Activated naive CD8-positive, alpha-beta T cell treated with anti-CD3 and anti-CD28 coated beads, Interleukin-2, amount 10 ng/mL, durations not matched to agents 7 days and 5 days (primary cell): ENCODE measurements at regions of chr11 and their contacts with region 1.

Region 1: GRCh38 chr11:9613118-9613829 is 39.8 kb downstream of the WEE1 start:
- DNase-seq: peak; percentile 89
- ATAC-seq: peak; percentile 65
- H3K4me3 Mint-ChIP-seq: peak overlapping the region; percentile 90
- H3K27ac Mint-ChIP-seq: peak overlapping the region; percentile 95
- H3K4me1 Mint-ChIP-seq: peaks cover 21% of the 10 kb centered on the region
- H3K27me3 Mint-ChIP-seq: no peaks in the 10 kb centered on the region

Region 2: DNA sequence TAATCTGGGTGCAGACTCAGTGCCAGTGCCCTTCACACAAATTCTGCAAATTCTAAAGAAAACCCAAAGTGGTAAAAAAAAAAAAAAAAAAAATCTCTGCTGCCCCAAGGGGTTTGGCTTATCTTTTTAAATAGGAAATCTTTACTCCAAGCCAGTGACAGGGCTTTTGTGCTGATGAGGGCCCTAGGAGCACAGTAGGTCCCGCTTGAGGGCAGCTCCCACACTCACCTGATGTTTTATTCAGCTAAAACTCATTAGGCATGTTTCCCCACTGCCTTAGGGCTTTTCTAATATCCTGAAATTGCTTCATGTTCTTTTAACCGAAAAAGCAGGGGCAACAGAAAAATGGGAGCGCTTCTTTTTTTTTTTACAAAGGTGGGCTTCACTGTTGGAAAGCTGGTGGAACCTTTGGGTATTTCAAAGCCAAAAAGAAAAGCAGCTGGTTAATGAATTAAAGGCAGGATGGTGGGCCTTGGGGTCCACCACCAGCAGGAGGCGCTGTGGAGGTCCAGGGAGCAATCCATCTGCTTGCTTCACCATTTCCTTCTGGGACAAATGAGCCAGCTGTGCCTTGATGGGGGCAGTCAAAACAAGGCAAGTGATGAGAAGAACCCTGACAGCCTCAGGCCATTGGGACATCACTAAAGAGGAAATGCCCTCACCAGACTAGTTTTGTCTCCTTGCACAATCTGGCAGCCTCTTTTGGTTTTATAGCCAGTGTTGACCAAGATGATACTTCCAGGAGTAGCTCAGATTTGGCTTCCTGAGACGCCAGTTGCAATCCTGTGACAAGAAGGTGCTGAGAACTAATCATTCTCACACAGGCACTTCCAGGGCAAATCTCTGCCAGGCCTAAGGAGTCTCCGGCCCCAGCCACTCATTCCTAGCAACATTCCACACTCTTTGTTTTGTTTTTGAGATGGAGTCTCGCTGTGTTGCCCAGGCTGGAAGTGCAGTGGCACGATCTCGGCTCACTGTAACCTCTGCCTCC is 78.2 kb before region 1 on chr11:
- POLR2A ChIA-PET with region 1: interaction called, 12 read pairs
- DNase-seq: peak; percentile 87
- ATAC-seq: peak; percentile 76
- H3K4me3 Mint-ChIP-seq: no peak overlapping the region
- H3K27ac Mint-ChIP-seq: no peak overlapping the region
- H3K4me1 Mint-ChIP-seq: no peaks in the 10 kb centered on the region
- H3K27me3 Mint-ChIP-seq: no peaks in the 10 kb centered on the region

Region 3: DNA sequence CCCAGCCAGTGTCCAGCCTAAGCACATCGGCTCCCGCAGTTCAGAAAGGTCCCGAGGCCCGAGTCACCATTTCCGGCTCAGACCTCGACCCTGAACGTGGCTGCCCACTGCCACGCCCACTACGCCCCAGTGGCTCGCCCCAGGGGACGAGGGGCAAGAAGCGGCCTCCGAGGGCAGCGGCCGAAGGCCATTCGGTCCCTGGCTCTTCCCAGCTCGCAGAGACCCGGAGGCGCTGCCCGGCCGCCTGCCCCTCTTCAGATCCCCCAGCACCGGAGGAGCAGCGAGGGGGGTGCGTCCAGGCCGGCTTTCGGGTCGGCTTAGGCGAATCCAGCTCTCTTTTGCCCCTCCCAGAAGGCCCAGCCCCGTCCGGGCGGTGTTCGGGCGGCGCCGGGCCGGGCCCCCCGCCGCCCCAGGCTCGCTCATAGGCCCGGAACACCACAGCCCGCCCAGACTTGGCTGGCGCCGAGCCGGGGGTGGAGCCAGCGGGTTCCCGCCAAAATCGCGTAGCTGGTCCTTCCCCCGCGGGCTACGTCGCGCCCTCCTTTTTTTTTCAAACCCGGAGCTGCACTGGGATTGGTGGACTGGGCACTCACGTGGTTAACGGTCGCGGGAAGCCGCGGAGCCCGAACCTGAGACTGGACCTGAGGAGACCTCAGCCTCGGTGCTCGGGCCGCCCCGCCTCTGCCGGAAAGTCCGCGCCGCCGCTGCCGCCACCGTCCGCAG is 40.1 kb before region 1 on chr11 and contains the start of gene WEE1:
- POLR2A ChIA-PET with region 1: interaction called, 19 read pairs
- DNase-seq: peak; percentile 99
- ATAC-seq: peak; percentile 96
- H3K4me3 Mint-ChIP-seq: peak within 1 kb of the TSS; percentile 97
- H3K27ac Mint-ChIP-seq: peak within 1 kb of the TSS; percentile 84
- H3K4me1 Mint-ChIP-seq: peaks cover 27% of the 10 kb centered on the region
- H3K27me3 Mint-ChIP-seq: peaks cover 17% of the 10 kb centered on the region
- total RNA-seq, gene WEE1: 47.8 to 50.5 TPM

Region 4: GRCh38 chr11:9601037-9601875 is 12.0 kb before region 1 on chr11:
- POLR2A ChIA-PET with region 1: interaction called, 23 read pairs
- DNase-seq: peak; percentile 58
- ATAC-seq: peak; percentile 92
- H3K4me3 Mint-ChIP-seq: peak overlapping the region; percentile 74
- H3K27ac Mint-ChIP-seq: peak overlapping the region; percentile 78
- H3K4me1 Mint-ChIP-seq: peaks cover 28% of the 10 kb centered on the region
- H3K27me3 Mint-ChIP-seq: peaks cover 13% of the 10 kb centered on the region

Region 5: GRCh38 chr11:9748361-9748970 is 135.2 kb after region 1 on chr11:
- POLR2A ChIA-PET with region 1: interaction called, 15 read pairs
- DNase-seq: peak; percentile 65
- ATAC-seq: peak; percentile 98
- H3K4me3 Mint-ChIP-seq: no peak overlapping the region
- H3K27ac Mint-ChIP-seq: no peak overlapping the region
- H3K4me1 Mint-ChIP-seq: peaks cover 15% of the 10 kb centered on the region
- H3K27me3 Mint-ChIP-seq: peaks cover 3% of the 10 kb centered on the region

Region 6: GRCh38 chr11:10080138-10080537 is 466.9 kb after region 1 on chr11:
- POLR2A ChIA-PET with region 1: no interaction called
- DNase-seq: no peak
- ATAC-seq: no peak
- H3K4me3 Mint-ChIP-seq: no peak overlapping the region
- H3K27ac Mint-ChIP-seq: no peak overlapping the region
- H3K4me1 Mint-ChIP-seq: no peaks in the 10 kb centered on the region
- H3K27me3 Mint-ChIP-seq: no peaks in the 10 kb centered on the region